A549 (cell line): ENCODE measurements at regions of chr19 and their contacts with region 1.

Region 1: DNA sequence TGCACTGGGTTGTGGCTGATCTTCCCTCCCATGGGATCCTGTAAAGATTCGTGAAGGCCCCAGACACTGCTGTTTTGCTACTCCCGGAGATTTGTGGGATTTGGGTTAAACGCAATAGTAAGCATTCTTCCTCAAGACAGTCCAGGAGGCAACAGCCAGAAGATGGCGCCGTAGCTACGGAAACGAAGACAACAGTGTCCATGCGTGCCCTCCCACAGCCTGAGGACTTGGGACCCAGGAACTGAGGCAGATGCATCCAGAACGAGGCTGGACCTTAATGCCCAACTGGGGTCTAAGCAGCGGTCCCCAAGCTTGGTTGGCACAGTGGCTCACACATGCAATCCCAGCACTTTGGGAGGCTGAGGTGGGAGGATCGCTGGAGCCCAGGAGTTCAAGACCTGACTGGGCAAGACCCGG is 57.6 kb upstream of the ZNF507 start:
- DNase-seq: peak; percentile 44 to 87
- ATAC-seq: peak; percentile 72 to 96
- H3K4me3 ChIP-seq: no peak overlapping the region
- H3K27ac ChIP-seq: no peak overlapping the region
- H3K4me1 ChIP-seq: peaks cover 3% of the 10 kb centered on the region; the same call in 1 of the 3 replicates
- CTCF ChIP-seq: peak; percentile 76
- EP300 ChIP-seq: no peak
- POLR2A ChIP-seq: no peak
- RAD21 ChIP-seq: peak; percentile 80 to 95

Region 2: DNA sequence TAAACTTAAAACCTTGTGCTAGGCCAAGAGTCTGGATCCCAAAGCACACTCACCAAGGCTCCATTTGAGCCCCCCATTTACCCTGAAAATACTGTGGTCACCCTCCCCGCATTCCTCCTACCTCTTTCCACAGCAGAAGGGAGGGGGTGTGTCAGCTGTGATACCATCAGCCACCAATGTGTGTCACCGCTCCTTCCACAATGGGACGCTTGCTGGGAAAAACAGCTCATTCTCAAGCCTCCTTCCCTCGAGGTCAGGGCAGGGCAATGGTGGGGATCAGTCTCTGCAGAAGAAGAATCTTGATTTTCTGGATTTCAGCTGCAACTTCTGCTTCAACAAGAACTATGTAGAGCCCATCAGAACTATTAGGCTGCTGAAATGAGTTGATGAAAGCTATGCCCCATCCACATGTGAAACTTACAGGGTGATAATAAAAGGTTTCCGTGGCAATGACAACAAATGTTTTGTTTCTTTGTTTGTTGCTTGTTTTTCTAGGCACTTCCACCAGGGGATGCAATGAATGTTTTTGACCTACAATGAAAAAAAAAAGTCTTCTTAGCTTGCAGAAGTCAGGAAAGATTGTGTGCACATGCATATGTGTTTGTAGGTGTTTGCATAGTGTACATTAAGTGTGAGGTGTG is 31.2 kb after region 1 on chr19:
- CTCF ChIA-PET with region 1: interaction called, 12 read pairs
- POLR2A ChIA-PET with region 1: no interaction called
- DNase-seq: peak; percentile 68 to 75
- ATAC-seq: peak; percentile 83 to 86; a peak in 5 of 6 replicates
- H3K4me3 ChIP-seq: no peak overlapping the region
- H3K27ac ChIP-seq: no peak overlapping the region
- H3K4me1 ChIP-seq: 0 out of 3 replicates have a peak, but pooled peaks cover 3% of the 10 kb centered on the region
- CTCF ChIP-seq: peak; percentile 37; the same call in 2 of the 3 replicates
- EP300 ChIP-seq: no peak
- POLR2A ChIP-seq: no peak
- RAD21 ChIP-seq: peak; percentile 22 to 42; a peak in 3 of 5 replicates

Region 3: DNA sequence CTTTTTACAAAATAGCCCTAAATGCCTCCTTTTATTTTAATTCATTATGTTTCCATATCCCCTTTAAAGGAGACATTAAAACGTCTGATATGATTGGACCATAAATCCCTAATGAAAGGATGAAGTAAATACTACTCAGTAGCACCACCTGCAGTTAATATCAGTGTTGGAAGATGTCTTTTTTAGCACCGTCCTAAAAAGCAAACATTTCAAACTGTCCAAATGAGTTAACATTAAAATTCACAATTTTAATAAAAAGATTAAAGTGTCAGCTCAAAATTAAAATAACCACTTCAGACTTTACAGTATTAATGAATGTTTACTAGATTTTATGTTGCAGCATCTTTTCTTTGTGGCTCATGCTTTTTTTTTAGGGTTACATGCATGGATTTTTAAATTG is 69.9 kb after region 1 on chr19:
- CTCF ChIA-PET with region 1: interaction called, 18 read pairs
- POLR2A ChIA-PET with region 1: no interaction called
- DNase-seq: peak; percentile 46 to 61
- ATAC-seq: peak; percentile 66 to 73; a peak in 4 of 6 replicates
- H3K4me3 ChIP-seq: no peak overlapping the region
- H3K27ac ChIP-seq: no peak overlapping the region
- H3K4me1 ChIP-seq: peaks cover 17% of the 10 kb centered on the region
- CTCF ChIP-seq: peak; percentile 70
- EP300 ChIP-seq: no peak
- POLR2A ChIP-seq: no peak
- RAD21 ChIP-seq: peak; percentile 54 to 55